HepG2 (cell line): ENCODE measurements at regions of chr15 and their contacts with region 1.

Region 1: DNA sequence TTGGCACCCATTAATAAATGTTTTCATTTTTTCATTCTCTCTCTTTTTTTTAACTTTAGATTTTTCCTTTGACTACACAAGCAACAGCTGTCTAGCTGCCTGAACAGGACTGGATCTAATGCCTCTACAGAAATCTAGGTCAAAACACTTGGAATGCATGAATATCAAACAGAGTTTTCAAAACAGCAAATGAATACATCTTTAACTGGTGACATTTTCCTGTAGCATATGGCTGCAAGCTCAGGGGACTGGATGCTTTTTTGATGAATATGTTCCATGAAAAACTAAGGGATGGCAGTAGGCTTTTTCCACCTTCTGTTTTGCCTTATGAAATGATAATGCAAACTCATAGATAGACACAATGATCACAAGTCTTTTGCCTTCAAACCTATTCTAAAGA is 661.7 kb downstream of the MCTP2 start:
- DNase-seq: no peak
- ATAC-seq: no peak
- H3K4me3 ChIP-seq: no peak overlapping the region
- H3K27ac ChIP-seq: no peak overlapping the region
- H3K4me1 ChIP-seq: no peaks in the 10 kb centered on the region
- H3K27me3 ChIP-seq: no peaks in the 10 kb centered on the region
- CTCF ChIP-seq: no peak
- EP300 ChIP-seq: no peak
- POLR2A ChIP-seq: no peak
- RAD21 ChIP-seq: no peak

Region 2: GRCh38 chr15:94683902-94684301 is 209.2 kb before region 1 on chr15:
- CTCF ChIA-PET with region 1: no interaction called
- POLR2A ChIA-PET with region 1: no interaction called
- in situ Hi-C with region 1: no loop called
- intact Hi-C with region 1: no loop called
- DNase-seq: no peak
- ATAC-seq: no peak
- H3K4me3 ChIP-seq: no peak overlapping the region
- H3K27ac ChIP-seq: no peak overlapping the region
- H3K4me1 ChIP-seq: no peaks in the 10 kb centered on the region
- H3K27me3 ChIP-seq: no peaks in the 10 kb centered on the region
- CTCF ChIP-seq: no peak
- EP300 ChIP-seq: no peak
- POLR2A ChIP-seq: no peak
- RAD21 ChIP-seq: no peak

Region 3: DNA sequence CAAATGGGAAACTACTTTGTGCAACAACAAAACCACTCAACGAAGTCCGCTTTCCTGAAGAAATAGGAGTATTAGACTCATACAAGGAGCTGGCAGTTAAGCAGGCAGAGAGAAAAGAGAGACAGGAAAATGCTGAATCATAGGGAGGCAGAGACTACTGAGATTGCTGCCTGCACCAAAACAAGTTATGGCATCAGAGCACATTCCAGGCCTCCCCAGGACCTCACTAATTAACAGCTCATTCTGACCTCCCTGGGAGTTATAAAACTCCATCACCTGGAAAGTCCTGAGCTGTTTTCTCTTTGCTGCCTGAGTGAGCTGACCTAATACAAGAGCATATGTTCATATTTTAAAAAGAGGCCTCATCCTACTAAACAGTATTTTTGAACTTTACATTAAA is 79.2 kb after region 1 on chr15:
- CTCF ChIA-PET with region 1: no interaction called
- POLR2A ChIA-PET with region 1: no interaction called
- in situ Hi-C with region 1: no loop called
- intact Hi-C with region 1: loop called (anchors 5 kb)
- DNase-seq: no peak
- ATAC-seq: no peak
- H3K4me3 ChIP-seq: no peak overlapping the region
- H3K27ac ChIP-seq: no peak overlapping the region
- H3K4me1 ChIP-seq: no peaks in the 10 kb centered on the region
- H3K27me3 ChIP-seq: no peaks in the 10 kb centered on the region
- CTCF ChIP-seq: no peak
- EP300 ChIP-seq: no peak
- POLR2A ChIP-seq: no peak
- RAD21 ChIP-seq: no peak

Region 4: GRCh38 chr15:95215017-95215416 is 321.9 kb after region 1 on chr15:
- CTCF ChIA-PET with region 1: no interaction called
- POLR2A ChIA-PET with region 1: no interaction called
- in situ Hi-C with region 1: no loop called
- intact Hi-C with region 1: no loop called
- DNase-seq: no peak
- ATAC-seq: no peak
- H3K4me3 ChIP-seq: no peak overlapping the region
- H3K27ac ChIP-seq: no peak overlapping the region
- H3K4me1 ChIP-seq: no peaks in the 10 kb centered on the region
- H3K27me3 ChIP-seq: no peaks in the 10 kb centered on the region
- CTCF ChIP-seq: no peak
- EP300 ChIP-seq: no peak
- POLR2A ChIP-seq: no peak
- RAD21 ChIP-seq: no peak